SK-N-SH (cell line): ENCODE measurements at regions of chr12 and their contacts with region 1.

Region 1: DNA sequence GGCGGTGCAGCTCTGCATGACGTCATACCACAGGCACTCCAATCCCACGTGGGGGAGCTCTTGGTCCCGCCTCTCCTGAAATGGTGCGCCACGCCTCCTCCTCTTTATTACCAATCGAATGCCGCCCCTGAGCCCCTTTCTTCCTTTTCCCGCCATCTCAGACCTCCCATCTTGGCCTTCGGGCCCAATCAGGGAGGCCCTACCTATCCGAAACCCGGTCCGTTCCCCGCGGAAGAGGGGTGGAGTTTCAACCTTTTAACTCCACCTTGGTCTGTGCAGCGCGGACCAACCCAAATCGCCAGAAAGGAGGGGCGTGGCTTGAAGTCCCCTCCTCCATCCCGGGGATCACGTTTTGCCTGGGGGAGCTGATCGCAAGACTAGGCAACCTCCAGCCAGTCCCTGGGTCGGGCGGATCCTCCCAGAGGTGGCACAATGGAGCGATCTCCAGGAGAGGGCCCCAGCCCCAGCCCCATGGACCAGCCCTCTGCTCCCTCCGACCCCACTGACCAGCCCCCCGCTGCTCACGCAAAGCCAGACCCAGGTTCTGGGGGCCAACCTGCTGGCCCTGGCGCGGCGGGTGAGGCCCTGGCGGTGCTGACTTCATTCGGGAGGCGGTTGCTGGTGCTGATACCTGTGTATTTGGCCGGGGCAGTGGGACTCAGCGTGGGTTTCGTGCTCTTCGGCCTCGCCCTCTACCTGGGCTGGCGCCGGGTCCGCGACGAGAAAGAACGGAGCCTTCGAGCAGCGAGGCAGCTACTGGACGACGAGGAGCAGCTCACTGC is at the start of gene ESYT1:
- DNase-seq: peak; percentile 94
- H3K4me3 ChIP-seq: peak within 1 kb of the TSS; percentile 67 to 89
- H3K27ac ChIP-seq: peak within 1 kb of the TSS; percentile 85 to 88
- H3K4me1 ChIP-seq: peaks cover 13 to 23% of the 10 kb centered on the region in 2 experiments
- H3K27me3 ChIP-seq: no peaks in the 10 kb centered on the region
- CTCF ChIP-seq: no peak; the same call in 1 of the 2 replicates
- EP300 ChIP-seq: no peak
- RAD21 ChIP-seq: no peak
- polyA plus RNA-seq, gene ESYT1: 132 and 143 TPM in 2 replicates

Region 2: GRCh38 chr12:55926738-55927587 is 201.1 kb before region 1 on chr12:
- CTCF ChIA-PET with region 1: no interaction called
- POLR2A ChIA-PET with region 1: no interaction called
- DNase-seq: peak; percentile 96
- H3K4me3 ChIP-seq: peak overlapping the region; percentile 90 to 94
- H3K27ac ChIP-seq: peak overlapping the region; percentile 94 to 98
- H3K4me1 ChIP-seq: peaks cover 21 to 28% of the 10 kb centered on the region in 2 experiments; a peak in 3 of 4 replicates
- H3K27me3 ChIP-seq: no peaks in the 10 kb centered on the region
- CTCF ChIP-seq: peak; percentile 97
- EP300 ChIP-seq: no peak
- RAD21 ChIP-seq: no peak; the same call in 1 of the 2 replicates

Region 3: DNA sequence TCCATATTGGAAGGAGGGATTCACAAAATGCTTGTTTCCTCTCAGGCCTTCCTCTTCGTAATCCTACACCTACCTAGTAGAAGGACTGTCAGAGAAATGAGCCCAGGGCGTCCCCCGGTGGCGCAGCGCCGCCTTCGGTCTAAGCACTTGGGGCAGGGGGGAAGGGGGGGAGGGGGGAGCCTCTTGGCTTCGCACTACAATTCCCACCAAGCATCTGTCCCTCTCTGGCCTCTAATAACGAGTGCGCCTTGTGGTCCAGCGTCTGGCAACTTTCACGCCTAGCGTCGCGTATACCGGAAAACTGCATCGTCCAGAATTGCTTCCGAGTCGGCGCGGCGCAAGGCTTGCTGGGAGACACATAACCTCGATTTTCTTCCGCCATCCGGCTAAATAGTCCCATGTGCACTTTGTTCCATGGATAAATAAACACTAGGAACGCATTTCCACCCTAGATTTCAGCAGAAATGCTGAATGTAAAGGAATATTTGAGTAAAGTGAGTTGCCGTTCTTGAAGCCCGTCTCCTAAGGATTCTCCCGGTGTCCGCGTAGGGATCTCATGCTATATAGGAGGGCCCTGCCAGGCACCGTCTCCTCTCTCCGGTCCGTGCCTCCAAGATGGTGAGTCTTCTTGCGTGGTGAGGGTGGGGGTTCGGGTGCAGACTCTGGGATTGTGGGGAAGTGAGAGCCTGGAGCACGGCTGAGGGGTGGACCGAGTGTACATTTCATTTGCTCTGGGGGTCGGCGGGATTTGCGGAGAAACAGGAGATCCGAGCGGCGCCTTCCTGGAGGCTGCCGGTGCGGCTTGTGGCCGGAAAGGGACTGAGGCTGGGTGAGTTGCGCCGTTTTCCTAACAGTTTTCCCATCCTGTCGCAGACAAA is 86.3 kb before region 1 on chr12 and contains the start of gene RPS26:
- CTCF ChIA-PET with region 1: interaction called, 14 read pairs
- POLR2A ChIA-PET with region 1: no interaction called
- DNase-seq: peak; percentile 89
- H3K4me3 ChIP-seq: peak within 1 kb of the TSS; percentile 81 to 93
- H3K27ac ChIP-seq: peak within 1 kb of the TSS; percentile 90 to 98
- H3K4me1 ChIP-seq: peaks cover 6 to 10% of the 10 kb centered on the region in 2 experiments
- H3K27me3 ChIP-seq: no peaks in the 10 kb centered on the region
- CTCF ChIP-seq: peak; percentile 50
- EP300 ChIP-seq: no peak
- RAD21 ChIP-seq: peak; percentile 71
- polyA plus RNA-seq, gene RPS26: 1,500 and 1,782 TPM in 2 replicates

Region 4: GRCh38 chr12:56117778-56118687 is 10.0 kb before region 1 on chr12 and contains the start of gene ZC3H10:
- CTCF ChIA-PET with region 1: interaction called, 23 read pairs
- POLR2A ChIA-PET with region 1: interaction called, 44 read pairs
- DNase-seq: peak; percentile 89
- H3K4me3 ChIP-seq: peak within 1 kb of the TSS; percentile 89 to 94
- H3K27ac ChIP-seq: peak within 1 kb of the TSS; percentile 93 to 95
- H3K4me1 ChIP-seq: peaks cover 18 to 20% of the 10 kb centered on the region in 2 experiments; a peak in 3 of 4 replicates
- H3K27me3 ChIP-seq: no peaks in the 10 kb centered on the region
- CTCF ChIP-seq: peak; percentile 51
- EP300 ChIP-seq: peak in 1 of 2 experiments; percentile 51; a peak in 2 of 4 replicates
- RAD21 ChIP-seq: no peak
- polyA plus RNA-seq, gene ZC3H10: 1.9 and 2.0 TPM in 2 replicates

Region 5: GRCh38 chr12:56158029-56158925 is 30.2 kb after region 1 on chr12 and contains the start of gene MYL6:
- CTCF ChIA-PET with region 1: interaction called, 11 read pairs
- POLR2A ChIA-PET with region 1: interaction called, 19 read pairs
- DNase-seq: peak; percentile 90
- H3K4me3 ChIP-seq: peak within 1 kb of the TSS; percentile 82 to 87
- H3K27ac ChIP-seq: peak within 1 kb of the TSS; percentile 82 to 89
- H3K4me1 ChIP-seq: peaks cover 30 to 39% of the 10 kb centered on the region in 2 experiments; a peak in 3 of 4 replicates
- H3K27me3 ChIP-seq: no peaks in the 10 kb centered on the region
- CTCF ChIP-seq: no peak
- EP300 ChIP-seq: no peak
- RAD21 ChIP-seq: no peak
- polyA plus RNA-seq, gene MYL6: 4,697 and 4,711 TPM in 2 replicates

Region 6: GRCh38 chr12:56258057-56258819 is 130.2 kb after region 1 on chr12 and contains the start of gene ANKRD52:
- CTCF ChIA-PET with region 1: interaction called, 19 read pairs
- POLR2A ChIA-PET with region 1: no interaction called
- DNase-seq: peak; percentile 98
- H3K4me3 ChIP-seq: peak within 1 kb of the TSS; percentile 90 to 95
- H3K27ac ChIP-seq: peak within 1 kb of the TSS; percentile 75 to 92
- H3K4me1 ChIP-seq: peaks cover 15 to 19% of the 10 kb centered on the region in 2 experiments
- H3K27me3 ChIP-seq: no peaks in the 10 kb centered on the region
- CTCF ChIP-seq: peak; percentile 68
- EP300 ChIP-seq: no peak; a peak in 1 of 4 replicates
- RAD21 ChIP-seq: peak; percentile 8; the same call in 1 of the 2 replicates
- polyA plus RNA-seq, gene ANKRD52: 22.5 and 23.4 TPM in 2 replicates